ENCODE measurements at regions of chr12 and their contacts with region 1.

Region 1: GRCh38 chr12:94545935-94546771 is 86.5 kb upstream of the CEP83 start:
- DNase-seq: peak; percentile 76
- H3K4me3 ChIP-seq: no peak overlapping the region
- H3K27ac ChIP-seq: no peak overlapping the region
- H3K4me1 ChIP-seq: no peaks in the 10 kb centered on the region
- H3K27me3 ChIP-seq: no peaks in the 10 kb centered on the region
- CTCF ChIP-seq: peak; percentile 83 to 91
- POLR2A ChIP-seq: no peak

Region 2: GRCh38 chr12:94710933-94711332 is 164.8 kb after region 1 on chr12:
- CTCF ChIA-PET with region 1: interaction called, 5 read pairs
- POLR2A ChIA-PET with region 1: no interaction called
- dilution Hi-C with region 1: no loop called
- intact Hi-C with region 1: loop called (anchors 1 kb)
- DNase-seq: peak; percentile 29
- H3K4me3 ChIP-seq: no peak overlapping the region
- H3K27ac ChIP-seq: no peak overlapping the region
- H3K4me1 ChIP-seq: peaks cover 14% of the 10 kb centered on the region
- H3K27me3 ChIP-seq: no peaks in the 10 kb centered on the region
- CTCF ChIP-seq: peak; percentile 44 to 47
- POLR2A ChIP-seq: no peak

Region 3: DNA sequence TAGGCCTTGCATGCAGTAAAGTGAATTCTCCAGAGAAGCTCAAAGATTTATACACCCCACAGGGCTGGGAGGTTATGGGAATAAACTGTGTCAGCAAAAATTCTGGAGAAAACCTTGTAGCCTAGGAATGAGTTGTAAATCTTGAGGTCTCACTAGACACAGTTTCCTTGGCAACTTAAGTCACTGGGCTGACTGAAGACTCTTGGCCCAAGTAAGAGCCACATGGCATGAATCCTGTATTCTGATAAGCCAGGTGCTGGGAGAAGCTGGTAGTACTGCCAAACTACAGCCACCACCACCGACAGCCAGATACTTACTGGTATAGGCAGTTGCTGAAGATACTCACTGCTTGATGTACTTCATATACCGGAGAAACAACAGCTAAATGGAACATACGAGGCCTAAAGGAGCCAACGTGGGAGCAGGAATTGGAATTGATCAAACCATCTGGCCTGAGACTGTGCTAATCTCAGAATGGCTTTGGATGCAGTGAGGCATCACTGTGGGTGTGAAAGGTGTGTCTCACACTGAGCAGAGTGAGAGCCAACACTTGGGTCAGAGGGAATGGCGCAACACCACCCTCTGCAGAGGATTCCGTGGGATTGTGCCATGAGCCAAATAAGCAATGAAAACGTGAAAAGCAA is 207.0 kb after region 1 on chr12:
- CTCF ChIA-PET with region 1: no interaction called
- POLR2A ChIA-PET with region 1: no interaction called
- dilution Hi-C with region 1: no loop called
- intact Hi-C with region 1: loop called (anchors 1 kb)
- DNase-seq: no peak
- H3K4me3 ChIP-seq: no peak overlapping the region
- H3K27ac ChIP-seq: no peak overlapping the region
- H3K4me1 ChIP-seq: no peaks in the 10 kb centered on the region
- H3K27me3 ChIP-seq: peaks cover 0 to 2% of the 10 kb centered on the region in 2 experiments
- CTCF ChIP-seq: no peak
- POLR2A ChIP-seq: no peak

Region 4: DNA sequence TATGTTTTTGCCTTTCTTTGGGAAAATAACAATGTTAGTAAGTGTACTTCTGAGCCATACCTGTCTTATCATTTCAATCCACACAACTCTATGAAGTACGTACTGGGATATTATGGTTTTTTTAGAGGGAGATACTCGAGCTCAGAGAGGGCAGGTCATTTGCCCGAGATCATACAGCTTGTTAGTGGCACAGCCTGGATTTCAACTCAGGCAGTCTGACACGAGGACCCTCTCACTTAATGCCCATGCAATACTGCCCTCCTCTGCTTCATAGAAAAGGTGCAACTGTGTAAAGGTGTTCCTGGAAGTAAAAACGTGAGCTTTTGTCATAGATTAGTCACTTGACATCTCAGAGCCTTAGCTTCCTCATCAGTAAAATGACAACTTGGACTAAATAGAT is 329.4 kb after region 1 on chr12:
- CTCF ChIA-PET with region 1: interaction called, 7 read pairs
- POLR2A ChIA-PET with region 1: no interaction called
- dilution Hi-C with region 1: no loop called
- intact Hi-C with region 1: loop called (anchors 1 kb)
- DNase-seq: peak; percentile 41
- H3K4me3 ChIP-seq: no peak overlapping the region
- H3K27ac ChIP-seq: no peak overlapping the region
- H3K4me1 ChIP-seq: no peaks in the 10 kb centered on the region
- H3K27me3 ChIP-seq: peaks cover 44 to 52% of the 10 kb centered on the region in 2 experiments
- CTCF ChIP-seq: peak in 1 of 2 donors; percentile 27
- POLR2A ChIP-seq: no peak

Region 5: GRCh38 chr12:94980577-94980976 is 434.4 kb after region 1 on chr12:
- CTCF ChIA-PET with region 1: interaction called, 3 read pairs
- POLR2A ChIA-PET with region 1: no interaction called
- dilution Hi-C with region 1: no loop called
- intact Hi-C with region 1: loop called (anchors 2 kb)
- DNase-seq: peak; percentile 34
- H3K4me3 ChIP-seq: no peak overlapping the region
- H3K27ac ChIP-seq: no peak overlapping the region
- H3K4me1 ChIP-seq: no peaks in the 10 kb centered on the region
- H3K27me3 ChIP-seq: no peaks in the 10 kb centered on the region
- CTCF ChIP-seq: no peak
- POLR2A ChIP-seq: no peak

Region 6: GRCh38 chr12:95117178-95117599 is 571.0 kb after region 1 on chr12:
- CTCF ChIA-PET with region 1: interaction called, 3 read pairs
- POLR2A ChIA-PET with region 1: no interaction called
- dilution Hi-C with region 1: no loop called
- intact Hi-C with region 1: loop called (anchors 5 kb)
- DNase-seq: peak; percentile 85
- H3K4me3 ChIP-seq: no peak overlapping the region
- H3K27ac ChIP-seq: peak overlapping the region; percentile 88
- H3K4me1 ChIP-seq: peaks cover 25% of the 10 kb centered on the region
- H3K27me3 ChIP-seq: no peaks in the 10 kb centered on the region
- CTCF ChIP-seq: peak; percentile 42 to 45
- POLR2A ChIP-seq: no peak

Measured in endothelial cell of umbilical vein (primary cell).